Left colon (tissue), 2 donors: ENCODE measurements at regions of chr2 and their contacts with region 1.

Region 1: GRCh38 chr2:170361090-170361936 is 183.4 kb downstream of the MYO3B start:
- DNase-seq: peak in 1 of 2 donors; percentile 56
- ATAC-seq: peak; percentile 77

Region 2: GRCh38 chr2:170815746-170816503 is 454.6 kb after region 1 on chr2:
- intact Hi-C with region 1: loop called in 1 of 2 experiments (anchors 10 kb)
- DNase-seq: peak in 1 of 2 donors; percentile 73
- ATAC-seq: peak; percentile 72